GM13977 (cell line): ENCODE measurements at regions of chr5 and their contacts with region 1.

Region 1: DNA sequence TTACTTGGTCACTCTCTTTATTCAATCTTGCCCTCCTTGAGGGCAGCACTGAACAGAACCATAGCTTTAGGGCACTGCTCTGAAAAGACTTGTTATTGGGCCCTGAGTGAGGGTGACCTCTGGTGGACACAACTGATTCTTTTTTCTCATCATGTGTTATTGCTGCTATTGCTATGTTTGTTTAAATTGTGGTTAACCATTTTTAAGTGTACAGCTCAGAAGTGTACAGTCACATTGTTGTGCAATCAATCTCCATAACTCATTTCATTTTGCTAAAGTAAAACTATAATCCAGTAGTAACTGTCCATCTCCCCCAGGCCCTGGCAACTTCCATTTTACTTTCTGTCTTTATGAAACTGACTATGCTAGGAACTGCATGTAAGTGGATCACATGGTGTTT is 351.1 kb upstream of the RIOK2 start:
- DNase-seq: peak; percentile 59
- CTCF ChIP-seq: peak; percentile 65

Region 2: DNA sequence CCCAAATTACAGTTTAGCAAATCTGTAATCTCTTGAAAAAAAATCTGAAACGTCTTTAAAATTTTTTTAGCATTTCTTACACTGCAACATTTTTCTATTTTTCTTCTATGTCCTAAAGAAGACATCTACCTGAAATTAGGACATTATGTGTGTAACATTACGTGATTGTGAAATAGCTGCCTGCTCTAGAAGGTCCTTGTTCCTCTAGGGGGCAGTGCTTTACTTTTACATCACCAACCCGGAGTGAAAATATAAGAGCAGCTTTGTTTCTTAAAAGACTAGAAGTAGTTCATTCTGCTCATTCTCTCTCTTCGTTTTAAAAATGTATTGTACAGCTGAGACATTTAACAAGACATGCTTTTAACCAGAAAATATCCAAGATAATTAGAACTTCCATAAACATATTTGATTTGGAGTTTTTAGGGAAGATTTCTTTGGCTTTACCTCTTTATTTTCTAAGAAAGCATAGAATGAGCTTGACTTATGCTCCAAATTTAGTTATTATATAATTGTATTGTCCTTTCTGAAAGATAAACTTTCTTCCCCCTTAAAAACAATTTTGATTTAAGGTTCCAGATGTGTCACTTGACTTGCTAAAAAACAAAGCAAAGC is 303.0 kb before region 1 on chr5:
- in situ Hi-C with region 1: loop called (anchors 25 kb)
- DNase-seq: peak; percentile 38
- CTCF ChIP-seq: peak; percentile 79

Region 3: GRCh38 chr5:97801497-97801896 is 267.3 kb after region 1 on chr5:
- in situ Hi-C with region 1: no loop called
- DNase-seq: no peak
- CTCF ChIP-seq: no peak

Region 4: DNA sequence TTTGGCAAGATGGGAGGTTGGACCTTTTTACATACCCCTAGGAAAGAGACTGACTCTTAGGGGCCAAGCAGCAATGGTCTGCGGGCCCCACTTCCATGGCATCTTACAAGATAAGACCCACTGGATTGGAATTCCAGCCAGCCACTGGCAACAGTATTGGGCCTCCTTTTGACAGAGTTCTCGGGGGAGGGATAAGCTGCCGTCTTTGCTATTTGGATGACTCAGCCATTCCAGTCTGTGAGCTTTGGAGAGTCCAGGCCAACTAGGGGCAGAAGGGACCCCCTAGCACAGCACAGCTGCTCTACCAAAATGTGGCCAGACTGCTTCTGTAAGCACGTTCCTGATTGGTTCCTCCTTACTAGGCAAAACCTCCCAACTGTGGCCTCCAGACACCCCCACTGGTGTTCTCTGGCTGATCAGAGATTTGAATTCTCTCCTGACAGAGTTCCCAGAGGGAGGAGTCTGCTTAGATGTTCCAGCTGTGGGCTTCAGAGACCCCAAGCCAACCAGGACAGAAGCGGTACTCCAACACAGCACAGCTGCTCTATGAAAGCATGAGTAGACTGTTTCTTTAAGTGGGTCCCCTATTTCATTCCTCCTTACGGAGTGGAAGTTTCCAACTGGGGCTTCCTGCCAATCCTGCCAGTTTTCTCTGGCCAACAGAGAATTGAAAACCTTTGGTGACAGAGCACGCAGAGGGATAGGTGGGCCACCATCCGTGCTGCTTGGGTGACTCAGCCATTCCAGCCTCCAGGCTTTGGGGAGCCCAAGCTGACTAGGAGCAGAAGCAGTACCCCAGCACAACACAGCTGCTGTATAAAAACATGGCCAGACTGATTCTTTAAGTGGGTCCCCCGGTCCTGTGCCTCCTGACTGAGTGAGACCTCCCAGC is 321.0 kb after region 1 on chr5:
- in situ Hi-C with region 1: no loop called
- DNase-seq: no peak
- CTCF ChIP-seq: no peak

Region 5: DNA sequence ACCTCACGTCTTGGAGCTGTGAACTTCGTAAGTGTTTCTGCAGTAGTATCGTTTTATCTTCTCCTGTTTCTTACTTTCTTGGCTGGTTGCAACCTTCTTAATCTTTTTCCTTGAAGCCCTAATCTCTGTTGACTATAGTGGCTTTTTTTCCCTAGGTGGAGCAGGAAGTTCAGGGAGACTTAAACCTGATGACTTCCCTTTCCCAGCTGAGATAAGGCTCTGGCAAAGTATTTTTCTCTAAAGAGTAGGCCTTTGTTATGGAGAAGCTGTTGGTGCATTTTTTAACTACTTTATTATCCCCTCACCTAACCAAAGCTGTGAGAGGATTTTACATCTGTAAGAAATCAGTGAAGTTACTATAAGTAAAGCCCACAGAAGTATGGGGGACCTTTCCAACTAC is 372.0 kb after region 1 on chr5:
- in situ Hi-C with region 1: no loop called
- DNase-seq: no peak
- CTCF ChIP-seq: no peak